CD4-positive, alpha-beta memory T cell (primary cell): ENCODE measurements at regions of chr1 and their contacts with region 1.

Region 1: DNA sequence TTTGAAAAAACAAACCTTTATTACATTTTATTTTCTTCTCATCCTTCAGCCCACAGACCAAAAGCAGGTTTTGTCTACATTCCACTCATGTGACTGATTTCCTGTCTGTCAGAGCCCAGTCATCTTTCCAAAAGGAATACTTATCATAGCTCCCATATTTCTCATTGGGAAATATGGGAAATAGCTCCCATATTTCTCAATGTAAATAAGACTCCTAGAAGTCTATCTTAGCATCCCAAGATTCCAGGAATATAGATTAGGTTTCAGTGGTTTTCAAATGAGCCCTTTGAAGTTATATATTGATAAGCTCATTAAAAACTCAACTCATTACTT is 19.1 kb upstream of the NRDC start:
- DNase-seq: no peak
- H3K4me3 ChIP-seq: no peak overlapping the region
- H3K4me3 Mint-ChIP-seq: no peak overlapping the region
- H3K27ac ChIP-seq: no peak overlapping the region
- H3K27ac Mint-ChIP-seq: no peak overlapping the region
- H3K4me1 ChIP-seq: no peaks in the 10 kb centered on the region
- H3K4me1 Mint-ChIP-seq: no peaks in the 10 kb centered on the region
- H3K27me3 ChIP-seq: no peaks in the 10 kb centered on the region
- H3K27me3 Mint-ChIP-seq: peaks cover 29 to 47% of the 10 kb centered on the region in 2 donors

Region 2: GRCh38 chr1:51697166-51697565 is 200.5 kb before region 1 on chr1:
- CTCF ChIA-PET with region 1: no interaction called
- POLR2A ChIA-PET with region 1: no interaction called
- intact Hi-C with region 1: no loop called
- DNase-seq: no peak
- H3K4me3 ChIP-seq: no peak overlapping the region
- H3K4me3 Mint-ChIP-seq: no peak overlapping the region
- H3K27ac ChIP-seq: no peak overlapping the region
- H3K27ac Mint-ChIP-seq: no peak overlapping the region
- H3K4me1 ChIP-seq: no peaks in the 10 kb centered on the region
- H3K4me1 Mint-ChIP-seq: peaks cover 4 to 7% (median 5%) of the 10 kb centered on the region in 4 donors
- H3K27me3 ChIP-seq: no peaks in the 10 kb centered on the region
- H3K27me3 Mint-ChIP-seq: no peaks in the 10 kb centered on the region

Region 3: GRCh38 chr1:51973603-51974474 is 76.2 kb after region 1 on chr1:
- CTCF ChIA-PET with region 1: no interaction called
- POLR2A ChIA-PET with region 1: no interaction called
- intact Hi-C with region 1: no loop called
- DNase-seq: no peak
- H3K4me3 ChIP-seq: no peak overlapping the region
- H3K4me3 Mint-ChIP-seq: no peak overlapping the region
- H3K27ac ChIP-seq: no peak overlapping the region
- H3K27ac Mint-ChIP-seq: peak overlapping the region in 1 of 7 donors; percentile 58
- H3K4me1 ChIP-seq: no peaks in the 10 kb centered on the region
- H3K4me1 Mint-ChIP-seq: no peaks in the 10 kb centered on the region
- H3K27me3 ChIP-seq: no peaks in the 10 kb centered on the region
- H3K27me3 Mint-ChIP-seq: peaks cover 0 to 7% of the 10 kb centered on the region in 2 donors

Region 4: DNA sequence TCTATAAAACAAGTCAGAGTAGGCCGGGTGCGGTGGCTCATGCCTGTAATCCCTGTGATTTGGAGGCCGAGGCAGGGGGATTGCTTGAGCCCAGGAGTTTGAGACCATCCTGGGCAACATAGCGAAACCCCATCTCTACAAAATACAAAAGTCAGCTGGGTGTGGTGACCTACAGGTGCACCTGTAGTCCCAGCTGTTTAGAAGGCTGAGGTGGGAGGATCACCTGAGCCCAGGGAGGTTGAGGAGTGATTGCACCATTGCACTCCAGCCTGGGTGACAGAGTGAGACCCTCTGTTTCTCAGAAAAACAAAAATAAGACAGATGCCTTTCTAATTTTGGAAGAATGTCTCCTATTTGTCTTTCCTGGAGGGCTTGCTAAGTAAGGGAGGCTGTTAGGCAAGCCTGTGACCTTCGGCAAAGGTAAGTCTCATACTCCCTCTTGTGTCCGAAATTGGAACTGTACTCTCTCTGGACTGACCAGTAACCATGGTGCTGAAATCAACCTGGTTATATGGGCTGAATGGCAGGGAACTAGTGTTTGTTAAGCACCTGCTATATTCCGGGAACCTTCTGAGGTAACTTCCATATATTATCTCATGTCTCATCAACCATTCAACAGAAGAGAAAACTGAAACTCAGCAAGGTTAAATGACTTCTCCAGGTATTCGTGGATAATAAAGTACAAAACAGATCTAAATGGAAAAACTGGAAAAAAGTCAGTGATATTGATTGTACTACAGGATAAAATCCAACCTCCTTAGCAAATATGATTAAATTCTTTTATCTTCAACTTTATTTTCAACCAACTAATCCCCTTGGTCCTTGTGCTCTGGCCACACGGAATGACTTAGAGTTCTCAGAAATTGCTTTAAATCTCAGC is 104.6 kb after region 1 on chr1:
- CTCF ChIA-PET with region 1: interaction called, 52 read pairs
- POLR2A ChIA-PET with region 1: no interaction called
- intact Hi-C with region 1: no loop called
- DNase-seq: peak; percentile 52 to 76 (median 68)
- H3K4me3 ChIP-seq: no peak overlapping the region
- H3K4me3 Mint-ChIP-seq: no peak overlapping the region
- H3K27ac ChIP-seq: no peak overlapping the region
- H3K27ac Mint-ChIP-seq: no peak overlapping the region
- H3K4me1 ChIP-seq: no peaks in the 10 kb centered on the region
- H3K4me1 Mint-ChIP-seq: peaks cover 0 to 2% (median 0%) of the 10 kb centered on the region in 4 donors
- H3K27me3 ChIP-seq: no peaks in the 10 kb centered on the region
- H3K27me3 Mint-ChIP-seq: peaks cover 9 to 20% of the 10 kb centered on the region in 2 donors

Region 5: GRCh38 chr1:52669696-52670095 is 772.0 kb after region 1 on chr1:
- CTCF ChIA-PET with region 1: no interaction called
- POLR2A ChIA-PET with region 1: no interaction called
- intact Hi-C with region 1: loop called (anchors 2 kb)
- DNase-seq: no peak
- H3K4me3 ChIP-seq: no peak overlapping the region
- H3K4me3 Mint-ChIP-seq: no peak overlapping the region
- H3K27ac ChIP-seq: no peak overlapping the region
- H3K27ac Mint-ChIP-seq: peak overlapping the region in 1 of 7 donors; percentile 40
- H3K4me1 ChIP-seq: peaks cover 6% of the 10 kb centered on the region
- H3K4me1 Mint-ChIP-seq: peaks cover 4 to 9% (median 6%) of the 10 kb centered on the region in 4 donors
- H3K27me3 ChIP-seq: no peaks in the 10 kb centered on the region
- H3K27me3 Mint-ChIP-seq: no peaks in the 10 kb centered on the region